ENCODE measurements at regions of chr4 and their contacts with region 1.

Region 1: GRCh38 chr4:15956179-15956850 is 6.7 kb downstream of the FGFBP2 start:
- DNase-seq: peak; percentile 71 to 95 (median 82)
- H3K4me3 ChIP-seq: no peak overlapping the region
- H3K27ac ChIP-seq: no peak overlapping the region
- H3K4me1 ChIP-seq: no peaks in the 10 kb centered on the region
- H3K27me3 ChIP-seq: no peaks in the 10 kb centered on the region
- CTCF ChIP-seq: peak; percentile 84 to 98 (median 94)
- POLR2A ChIP-seq: no peak

Region 2: GRCh38 chr4:15479089-15479912 is 477.0 kb before region 1 on chr4:
- intact Hi-C with region 1: loop called in 1 of 2 experiments (anchors 5 kb)
- DNase-seq: peak; percentile 50 to 73 (median 67)
- H3K4me3 ChIP-seq: peak overlapping the region; percentile 6 to 53 (median 22)
- H3K27ac ChIP-seq: peak overlapping the region; percentile 36 to 81 (median 45)
- H3K4me1 ChIP-seq: peaks cover 4 to 10% of the 10 kb centered on the region in 2 donors
- H3K27me3 ChIP-seq: no peaks in the 10 kb centered on the region
- CTCF ChIP-seq: peak; percentile 43 to 80 (median 70)
- POLR2A ChIP-seq: peak in 1 of 2 donors; percentile 29

Region 3: DNA sequence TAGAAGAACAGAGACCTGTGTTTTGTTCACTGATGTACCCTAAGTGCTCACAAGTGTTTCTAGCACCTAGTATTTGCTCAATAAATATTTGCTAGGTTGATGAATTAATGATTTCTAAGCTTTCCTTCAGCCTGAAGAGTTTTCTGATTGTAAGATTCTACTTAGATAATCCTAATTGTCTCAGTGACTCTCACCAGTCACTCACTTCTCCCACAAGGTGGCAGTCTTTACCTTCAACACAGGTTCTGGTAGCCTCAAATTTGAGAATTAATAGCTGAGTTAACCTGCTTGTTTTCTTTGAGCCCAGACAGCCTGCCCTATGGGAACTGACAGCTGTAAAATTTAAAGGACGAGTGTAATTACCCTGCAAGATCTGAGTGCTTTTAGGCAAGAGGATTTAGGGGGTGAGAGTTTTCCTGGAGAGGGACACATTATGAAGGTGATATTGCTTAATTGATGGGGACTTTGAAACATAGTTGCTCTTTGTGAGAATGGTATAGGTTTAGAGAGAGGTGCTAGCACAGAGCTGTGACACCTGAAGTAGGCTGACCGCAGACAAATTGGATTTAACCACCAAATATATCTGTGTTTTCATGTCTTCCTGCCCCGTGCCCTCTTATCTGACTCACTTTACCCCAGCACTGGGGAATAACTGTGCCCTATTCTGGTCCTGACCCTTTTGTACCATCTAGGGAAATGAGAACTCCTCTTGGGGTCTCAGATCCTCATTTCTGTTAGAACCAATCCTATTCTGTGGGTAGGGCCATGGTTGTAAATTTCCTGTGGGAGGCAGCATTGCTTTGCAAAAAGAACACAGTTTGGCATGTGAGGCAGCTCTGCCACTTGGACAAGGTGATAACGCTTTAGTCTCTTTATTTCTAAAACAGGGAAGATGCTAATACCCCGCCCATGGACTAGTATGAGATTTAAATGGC is 150.5 kb before region 1 on chr4:
- intact Hi-C with region 1: loop called in 1 of 2 experiments (anchors 5 kb)
- DNase-seq: peak; percentile 23 to 72 (median 41)
- H3K4me3 ChIP-seq: no peak overlapping the region
- H3K27ac ChIP-seq: no peak overlapping the region
- H3K4me1 ChIP-seq: no peaks in the 10 kb centered on the region
- H3K27me3 ChIP-seq: no peaks in the 10 kb centered on the region
- CTCF ChIP-seq: peak; percentile 60 to 76 (median 70)
- POLR2A ChIP-seq: no peak

Region 4: GRCh38 chr4:15882675-15883086 is 73.6 kb before region 1 on chr4:
- intact Hi-C with region 1: loop called (anchors 2 to 5 kb)
- DNase-seq: peak; percentile 39 to 75 (median 47)
- H3K4me3 ChIP-seq: no peak overlapping the region
- H3K27ac ChIP-seq: no peak overlapping the region
- H3K4me1 ChIP-seq: no peaks in the 10 kb centered on the region
- H3K27me3 ChIP-seq: no peaks in the 10 kb centered on the region
- CTCF ChIP-seq: peak; percentile 78 to 92 (median 85)
- POLR2A ChIP-seq: no peak

Region 5: DNA sequence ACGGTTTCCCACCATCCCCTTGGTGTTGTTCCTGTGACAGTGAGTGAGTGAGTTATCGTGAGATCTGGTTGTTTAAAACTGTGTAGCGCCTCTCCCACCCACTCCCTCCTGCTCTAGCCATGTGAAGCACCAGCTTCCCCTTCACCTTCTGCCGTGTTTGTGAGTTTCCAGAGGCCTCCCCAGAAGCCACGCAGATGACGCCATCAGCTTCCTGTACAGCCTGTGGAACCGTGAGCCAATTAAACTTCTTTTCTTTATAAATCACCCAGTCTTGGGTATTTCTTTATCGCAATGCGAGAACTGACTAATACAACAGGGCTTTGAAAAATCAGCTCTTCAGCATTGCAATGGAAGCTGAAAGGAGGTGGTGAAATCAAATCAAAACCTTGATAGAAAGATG is 67.8 kb before region 1 on chr4:
- intact Hi-C with region 1: loop called (anchors 2 to 5 kb)
- DNase-seq: no peak
- H3K4me3 ChIP-seq: no peak overlapping the region
- H3K27ac ChIP-seq: no peak overlapping the region
- H3K4me1 ChIP-seq: no peaks in the 10 kb centered on the region
- H3K27me3 ChIP-seq: no peaks in the 10 kb centered on the region
- CTCF ChIP-seq: no peak
- POLR2A ChIP-seq: no peak

Region 6: DNA sequence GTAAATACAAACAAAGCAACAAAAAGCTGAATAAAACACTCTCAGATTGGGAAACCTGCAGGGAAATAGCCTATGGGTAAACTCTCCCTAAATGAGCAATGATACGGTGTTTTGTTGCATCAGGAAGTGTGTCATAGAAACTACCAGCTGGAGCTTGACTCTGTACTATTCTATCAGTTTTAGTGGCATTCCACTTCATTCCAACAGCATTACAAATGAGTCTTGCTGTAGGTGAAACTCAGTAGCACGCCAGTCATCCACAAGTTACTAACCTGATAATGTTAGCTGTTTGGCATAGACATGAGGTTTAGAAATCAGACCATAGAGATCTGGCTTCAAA is 42.7 kb before region 1 on chr4:
- intact Hi-C with region 1: no loop called
- DNase-seq: no peak
- H3K4me3 ChIP-seq: no peak overlapping the region
- H3K27ac ChIP-seq: no peak overlapping the region
- H3K4me1 ChIP-seq: no peaks in the 10 kb centered on the region
- H3K27me3 ChIP-seq: no peaks in the 10 kb centered on the region
- CTCF ChIP-seq: no peak
- POLR2A ChIP-seq: no peak

Measured in adrenal gland (tissue), 19 donors.